Caco-2 (cell line): ENCODE measurements at regions of chr20 and their contacts with region 1.

Region 1: GRCh38 chr20:13422637-13423036 is 201.6 kb downstream of the ISM1 start:
- DNase-seq: no peak
- H3K4me3 ChIP-seq: no peak overlapping the region
- H3K4me3 Mint-ChIP-seq: no peak overlapping the region
- H3K27ac Mint-ChIP-seq: no peak overlapping the region
- H3K4me1 ChIP-seq: peaks cover 46% of the 10 kb centered on the region
- H3K4me1 Mint-ChIP-seq: peaks cover 31% of the 10 kb centered on the region
- H3K27me3 ChIP-seq: no peaks in the 10 kb centered on the region
- H3K27me3 Mint-ChIP-seq: no peaks in the 10 kb centered on the region
- CTCF ChIP-seq: no peak

Region 2: DNA sequence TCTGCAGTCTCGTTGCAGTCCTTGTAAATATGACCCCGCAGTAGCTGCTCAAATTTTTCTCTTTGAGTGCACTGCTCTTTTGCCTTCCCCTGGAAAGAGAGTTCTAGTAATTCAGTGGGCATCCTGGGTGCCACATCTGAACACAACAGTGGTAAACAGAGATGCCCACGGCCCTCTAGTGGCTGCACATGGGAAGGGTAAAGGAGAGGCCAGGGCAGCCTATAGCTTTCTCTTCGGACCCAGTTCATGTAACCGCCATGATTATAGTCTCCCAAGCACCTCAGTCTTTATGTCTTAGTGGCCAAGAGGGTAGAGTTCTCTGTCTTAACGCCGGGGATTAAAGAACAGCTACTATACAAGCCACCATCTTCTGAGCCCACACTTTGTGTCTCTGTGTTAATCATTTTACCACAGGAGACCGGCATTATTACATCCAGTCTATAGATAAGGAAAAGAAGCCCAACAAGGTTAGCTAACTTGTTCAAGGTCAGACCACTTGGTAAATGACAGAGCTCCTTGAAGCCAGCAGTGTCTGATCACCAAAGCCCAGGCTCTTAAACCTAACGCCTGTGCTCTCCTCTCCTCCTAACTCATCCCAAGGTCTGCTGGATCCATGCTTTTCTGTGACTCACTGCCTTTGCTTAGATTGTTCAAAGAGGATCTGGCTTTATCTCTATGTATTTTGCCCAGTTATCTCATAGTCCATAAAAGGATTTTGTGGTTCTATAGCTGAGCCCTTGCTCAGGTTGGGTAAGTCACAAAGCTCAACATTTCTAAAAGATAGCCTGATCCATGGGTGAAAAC is 119.8 kb before region 1 on chr20:
- CTCF ChIA-PET with region 1: no interaction called
- POLR2A ChIA-PET with region 1: no interaction called
- intact Hi-C with region 1: loop called (anchors 2 kb)
- DNase-seq: peak; percentile 62 to 71
- H3K4me3 ChIP-seq: no peak overlapping the region
- H3K4me3 Mint-ChIP-seq: peak overlapping the region; percentile 42
- H3K27ac Mint-ChIP-seq: peak overlapping the region; percentile 89
- H3K4me1 ChIP-seq: peaks cover 32% of the 10 kb centered on the region
- H3K4me1 Mint-ChIP-seq: peaks cover 18% of the 10 kb centered on the region
- H3K27me3 ChIP-seq: no peaks in the 10 kb centered on the region
- H3K27me3 Mint-ChIP-seq: no peaks in the 10 kb centered on the region
- CTCF ChIP-seq: peak; percentile 56 to 66